Left cardiac atrium (tissue), 4 donors: ENCODE measurements at regions of chr2 and their contacts with region 1.

Region 1: GRCh38 chr2:230411570-230412370 is 4.2 kb upstream of the SP100 start:
- DNase-seq: peak; percentile 66
- ATAC-seq: peak; percentile 85

Region 2: DNA sequence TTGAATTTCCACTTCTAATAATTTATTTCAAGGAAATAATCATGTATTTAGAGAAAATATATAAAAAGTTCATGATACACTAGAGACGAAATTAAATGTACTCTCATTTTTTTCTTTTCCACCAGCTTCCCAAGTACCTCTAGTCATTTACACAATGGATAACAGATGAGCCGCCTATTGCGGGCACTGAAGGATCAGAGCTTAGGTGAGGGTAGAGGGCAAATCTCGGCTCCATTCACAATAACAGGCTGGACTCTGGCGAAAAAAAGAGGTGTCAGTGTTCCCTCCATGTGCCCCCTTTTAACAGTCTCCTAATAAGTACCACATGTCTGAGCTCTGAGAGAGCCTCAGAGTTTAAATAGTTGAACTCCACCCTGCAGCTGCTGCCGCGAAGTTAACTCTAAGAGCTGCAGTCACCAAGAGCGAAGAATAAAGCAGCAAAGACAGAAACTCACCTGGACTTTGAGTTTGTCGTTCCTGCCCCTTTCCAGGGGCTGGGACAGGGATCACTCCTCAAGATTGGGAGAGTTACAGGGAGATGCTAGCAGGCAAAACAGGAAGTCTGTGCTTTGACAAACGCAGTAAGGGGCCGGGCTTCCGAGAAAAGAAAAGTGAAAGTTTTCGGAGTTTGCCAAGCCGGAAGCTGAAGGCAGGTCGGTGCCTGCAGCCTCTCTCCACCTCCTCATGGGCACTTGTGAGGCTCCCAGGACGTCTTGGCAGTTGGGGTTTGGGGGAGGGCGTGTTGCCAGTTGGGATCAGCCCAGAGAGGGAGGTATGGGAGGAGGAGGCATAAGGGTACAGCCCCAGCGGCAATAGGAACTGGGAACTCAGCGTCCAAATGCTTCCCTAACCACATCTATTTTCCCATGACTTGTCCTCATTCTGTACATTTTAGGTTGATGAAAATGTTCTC is 192.1 kb before region 1 on chr2 and contains the start of gene SP110:
- intact Hi-C with region 1: loop called in 1 of 2 experiments (anchors 10 kb)
- DNase-seq: peak; percentile 84
- ATAC-seq: peak; percentile 95 to 97
- total RNA-seq, gene SP110: 11.0 to 15.1 TPM

Region 3: DNA sequence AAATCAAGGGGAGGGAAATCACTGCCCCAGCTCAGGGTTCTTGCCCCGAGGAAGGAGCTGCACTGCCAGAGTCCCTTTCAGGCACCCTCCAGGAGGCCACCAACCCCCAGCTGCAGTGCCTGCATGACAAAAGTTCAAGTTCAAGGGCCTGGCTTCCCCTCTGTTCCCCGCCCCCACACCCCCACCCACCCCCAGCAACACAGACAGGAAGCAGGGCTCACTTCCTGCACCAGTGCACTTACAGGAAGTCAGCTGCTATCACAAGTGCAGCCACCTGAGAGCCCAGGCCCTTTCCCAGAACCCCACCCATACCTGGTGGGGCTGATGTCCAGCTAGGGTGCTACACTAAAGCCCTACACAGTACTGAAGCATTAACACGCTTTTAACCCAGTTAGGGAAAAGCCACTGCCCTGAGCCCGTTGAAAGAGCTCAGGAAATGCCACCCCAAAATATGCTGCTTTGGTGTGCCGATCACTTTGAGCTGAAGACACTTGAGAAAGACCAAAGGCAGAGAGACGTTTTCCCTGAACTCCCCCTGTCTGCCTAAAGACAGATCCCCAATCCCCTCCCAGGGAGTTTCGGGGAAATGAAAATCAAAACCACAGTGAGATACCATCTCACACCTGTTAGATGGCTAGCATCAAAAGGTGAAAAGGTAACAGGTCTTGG is 190.9 kb after region 1 on chr2:
- intact Hi-C with region 1: no loop called
- DNase-seq: no peak
- ATAC-seq: peak in 1 of 2 donors; percentile 38